Aorta (tissue), 5 donors: ENCODE measurements at regions of chr17 and their contacts with region 1.

Region 1: GRCh38 chr17:17496189-17497064 is at the start of gene RASD1:
- DNase-seq: peak; percentile 93 to 96
- ATAC-seq: peak; percentile 95
- H3K4me3 ChIP-seq: peak within 1 kb of the TSS; percentile 45 to 58
- H3K27ac ChIP-seq: peak within 1 kb of the TSS in 1 of 2 donors; percentile 49
- H3K4me1 ChIP-seq: no peaks in the 10 kb centered on the region
- H3K27me3 ChIP-seq: no peaks in the 10 kb centered on the region
- total RNA-seq, gene RASD1: 12.0 to 50.1 TPM

Region 2: DNA sequence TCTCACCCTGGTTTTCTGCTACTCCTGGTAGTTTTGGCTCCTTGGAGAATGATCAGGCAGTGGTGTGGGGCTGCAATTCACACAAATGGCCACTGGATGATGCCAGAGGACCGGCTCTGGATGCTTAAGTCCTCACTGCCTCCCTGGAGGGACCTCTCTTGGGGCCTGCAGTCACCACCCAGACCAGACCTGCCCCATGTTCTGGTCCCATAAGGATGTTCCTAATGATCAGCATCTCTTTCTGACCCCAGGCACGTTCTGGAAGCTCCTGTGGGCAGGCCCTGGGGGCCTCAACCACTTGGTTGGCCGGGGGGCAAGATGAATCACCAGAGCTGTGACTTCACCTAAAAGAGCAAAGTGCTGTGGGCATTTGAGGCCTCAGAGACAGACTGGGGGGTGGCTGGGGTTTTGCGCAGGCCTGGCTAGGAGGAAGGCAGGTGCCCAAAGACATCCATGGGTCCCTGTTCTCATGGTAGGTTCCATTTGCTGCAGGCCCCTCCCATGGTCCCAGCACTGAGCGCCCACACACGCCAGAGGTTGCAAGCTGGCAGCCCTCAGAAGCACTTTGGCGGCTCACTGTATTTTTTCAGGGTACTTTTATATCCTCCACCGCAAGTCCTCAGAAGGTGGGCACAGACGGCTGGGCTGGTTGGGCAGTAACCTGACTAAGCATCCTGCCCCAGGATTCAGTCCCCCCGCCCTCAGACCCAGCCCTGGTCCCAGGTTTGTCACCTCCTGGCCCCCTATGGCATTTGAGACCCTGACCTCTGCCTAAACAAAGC is 140.1 kb before region 1 on chr17:
- intact Hi-C with region 1: loop called in 1 of 2 experiments (anchors 5 kb)
- DNase-seq: peak; percentile 79 to 84
- ATAC-seq: peak; percentile 86
- H3K4me3 ChIP-seq: no peak overlapping the region
- H3K27ac ChIP-seq: no peak overlapping the region
- H3K4me1 ChIP-seq: no peaks in the 10 kb centered on the region
- H3K27me3 ChIP-seq: no peaks in the 10 kb centered on the region

Region 3: DNA sequence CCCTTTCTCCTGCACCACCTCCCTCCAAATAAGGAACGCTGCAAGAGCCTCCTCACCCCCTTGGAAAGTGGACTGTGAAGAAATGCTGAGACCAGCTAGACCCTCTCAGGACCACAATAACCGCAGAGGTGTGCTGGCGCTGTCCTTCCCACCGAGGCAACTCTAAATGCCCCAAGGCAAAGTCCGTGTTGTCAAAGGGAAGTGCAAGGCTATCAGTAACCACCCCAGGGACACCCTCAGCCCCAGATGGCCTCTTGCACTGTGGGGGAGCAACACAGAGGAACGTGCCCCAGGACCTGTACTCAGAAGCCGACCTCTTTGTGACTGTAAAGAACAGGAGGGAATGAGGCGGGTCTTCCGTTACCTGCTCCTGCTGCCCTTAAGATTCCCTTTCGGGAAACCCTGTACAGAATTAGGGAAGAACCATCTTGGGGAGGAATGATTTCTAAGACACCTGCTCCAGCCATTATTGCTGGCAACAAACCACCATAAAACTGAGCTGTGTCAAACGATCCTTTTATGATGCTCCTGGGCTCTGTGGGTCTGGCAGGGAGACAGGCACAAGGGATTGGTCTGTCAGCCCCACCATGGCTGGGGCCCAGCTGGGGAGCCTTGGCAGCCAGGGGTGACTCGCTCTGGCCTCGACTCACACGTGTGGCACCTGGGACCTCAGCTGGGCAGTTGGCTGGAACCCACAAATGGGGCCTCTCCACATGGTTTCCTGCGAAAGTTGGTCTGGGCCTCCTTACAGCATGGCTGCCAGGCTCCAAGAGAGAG is 34.2 kb before region 1 on chr17:
- intact Hi-C with region 1: no loop called
- DNase-seq: no peak
- ATAC-seq: no peak
- H3K4me3 ChIP-seq: no peak overlapping the region
- H3K27ac ChIP-seq: no peak overlapping the region
- H3K4me1 ChIP-seq: no peaks in the 10 kb centered on the region
- H3K27me3 ChIP-seq: no peaks in the 10 kb centered on the region

Region 4: DNA sequence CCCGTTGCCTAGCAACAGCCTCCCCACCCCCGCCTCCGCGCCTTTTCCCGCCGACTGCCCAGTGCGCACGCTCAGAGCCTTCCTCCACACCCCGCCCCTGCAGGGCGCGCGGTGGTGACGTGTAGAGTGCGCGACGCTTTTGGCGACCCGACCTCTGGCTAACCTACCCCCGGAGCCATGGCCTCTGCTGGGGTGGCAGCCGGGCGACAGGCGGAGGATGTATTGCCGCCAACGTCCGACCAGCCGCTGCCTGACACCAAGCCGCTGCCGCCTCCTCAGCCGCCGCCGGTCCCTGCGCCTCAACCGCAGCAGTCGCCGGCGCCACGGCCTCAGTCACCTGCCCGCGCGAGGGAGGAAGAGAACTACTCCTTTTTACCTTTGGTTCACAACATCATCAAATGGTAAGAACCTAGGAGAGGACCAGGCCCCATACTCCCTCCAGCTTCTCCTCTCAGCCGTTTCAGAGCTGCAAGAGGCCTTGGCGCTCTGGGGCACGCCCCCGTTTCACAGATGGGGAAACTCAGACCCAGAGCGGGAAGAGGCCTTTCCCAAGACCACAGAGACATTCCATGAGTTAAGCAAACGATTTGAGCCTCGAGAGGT is 19.5 kb before region 1 on chr17 and contains the start of gene MED9:
- intact Hi-C with region 1: loop called in 1 of 2 experiments (anchors 2 kb)
- DNase-seq: peak; percentile 95 to 98
- ATAC-seq: peak; percentile 96
- H3K4me3 ChIP-seq: peak within 1 kb of the TSS; percentile 42 to 60
- H3K27ac ChIP-seq: peak within 1 kb of the TSS in 1 of 2 donors; percentile 3
- H3K4me1 ChIP-seq: no peaks in the 10 kb centered on the region
- H3K27me3 ChIP-seq: no peaks in the 10 kb centered on the region
- total RNA-seq, gene MED9: 7.7 to 11.1 TPM

Region 5: GRCh38 chr17:17568749-17569195 is 72.3 kb after region 1 on chr17:
- intact Hi-C with region 1: loop called (anchors 1 to 2 kb)
- DNase-seq: peak; percentile 71 to 87
- ATAC-seq: no peak
- H3K4me3 ChIP-seq: no peak overlapping the region
- H3K27ac ChIP-seq: no peak overlapping the region
- H3K4me1 ChIP-seq: no peaks in the 10 kb centered on the region
- H3K27me3 ChIP-seq: no peaks in the 10 kb centered on the region

Region 6: GRCh38 chr17:17591355-17592298 is 95.2 kb after region 1 on chr17 and contains the start of gene PEMT:
- intact Hi-C with region 1: loop called in 1 of 2 experiments (anchors 5 kb)
- DNase-seq: peak; percentile 96 to 98
- ATAC-seq: peak; percentile 98
- H3K4me3 ChIP-seq: peak within 1 kb of the TSS; percentile 74 to 87
- H3K27ac ChIP-seq: peak within 1 kb of the TSS in 1 of 2 donors; percentile 46
- H3K4me1 ChIP-seq: peaks cover 0 to 4% of the 10 kb centered on the region in 2 donors
- H3K27me3 ChIP-seq: no peaks in the 10 kb centered on the region
- total RNA-seq, gene PEMT: 15.3 to 17.7 TPM

Region 7: DNA sequence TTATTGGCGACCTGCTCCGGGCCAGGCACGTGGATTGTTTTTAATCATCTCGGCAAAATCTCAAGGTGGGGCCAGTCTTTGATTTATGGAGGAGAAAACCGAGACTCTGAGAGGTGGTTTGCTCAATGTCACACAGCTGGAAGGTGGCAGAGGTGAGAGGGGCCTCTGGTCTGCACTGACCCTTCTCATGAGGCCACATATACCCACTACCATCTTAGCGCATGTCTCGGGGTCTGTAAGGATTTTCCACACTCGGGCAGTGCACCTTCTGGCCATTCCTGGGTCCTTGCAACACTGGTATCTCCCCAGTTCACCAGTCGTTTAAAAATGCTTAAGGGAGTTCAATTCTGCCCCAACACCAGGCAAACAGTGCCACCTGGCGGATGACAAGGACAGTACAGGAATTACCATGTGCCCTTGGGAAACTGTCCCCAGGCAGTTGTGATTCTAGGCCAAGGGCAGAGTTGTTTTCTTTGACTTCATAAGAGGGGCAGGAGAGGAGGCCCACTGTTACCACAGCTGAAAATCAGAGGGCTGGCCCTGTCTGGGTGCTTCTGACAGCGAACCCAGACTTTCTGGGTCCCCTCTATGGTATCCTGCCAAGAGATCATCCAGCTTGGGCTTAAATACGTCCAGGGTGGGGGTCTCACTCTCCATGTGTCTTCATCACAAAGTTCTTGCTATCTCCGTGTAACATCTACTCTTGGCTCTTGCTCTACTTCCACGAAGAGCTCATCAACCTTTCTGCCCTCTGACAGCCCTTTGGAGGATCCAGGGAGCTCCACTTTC is 145.4 kb after region 1 on chr17:
- intact Hi-C with region 1: loop called in 1 of 2 experiments (anchors 2 kb)
- DNase-seq: peak; percentile 81 to 90
- ATAC-seq: peak; percentile 83
- H3K4me3 ChIP-seq: no peak overlapping the region
- H3K27ac ChIP-seq: no peak overlapping the region
- H3K4me1 ChIP-seq: no peaks in the 10 kb centered on the region
- H3K27me3 ChIP-seq: no peaks in the 10 kb centered on the region